Activated CD4-positive, alpha-beta memory T cell treated with anti-CD3 and anti-CD28 coated beads, Interleukin-2, amount 10 ng/mL, durations not matched to agents 7 days and 5 days (primary cell): ENCODE measurements at regions of chrX and their contacts with region 1.

Region 1: GRCh38 chrX:45843518-45843917 is 642.8 kb upstream of the DIPK2B start:
- DNase-seq: no peak
- H3K4me3 Mint-ChIP-seq: no peak overlapping the region
- H3K27ac Mint-ChIP-seq: peak overlapping the region; percentile 72
- H3K4me1 Mint-ChIP-seq: peaks cover 64% of the 10 kb centered on the region
- H3K27me3 Mint-ChIP-seq: no peaks in the 10 kb centered on the region

Region 2: GRCh38 chrX:45801554-45801953 is 42.0 kb before region 1 on chrX:
- CTCF ChIA-PET with region 1: interaction called, 11 read pairs
- POLR2A ChIA-PET with region 1: interaction called, 3 read pairs
- DNase-seq: no peak
- H3K4me3 Mint-ChIP-seq: peak overlapping the region; percentile 48
- H3K27ac Mint-ChIP-seq: peak overlapping the region; percentile 73
- H3K4me1 Mint-ChIP-seq: peaks cover 82% of the 10 kb centered on the region
- H3K27me3 Mint-ChIP-seq: no peaks in the 10 kb centered on the region

Region 3: GRCh38 chrX:45830343-45830742 is 13.2 kb before region 1 on chrX:
- CTCF ChIA-PET with region 1: interaction called, 5 read pairs
- POLR2A ChIA-PET with region 1: interaction called, 25 read pairs
- DNase-seq: no peak
- H3K4me3 Mint-ChIP-seq: peak overlapping the region; percentile 54
- H3K27ac Mint-ChIP-seq: peak overlapping the region; percentile 82
- H3K4me1 Mint-ChIP-seq: peaks cover 68% of the 10 kb centered on the region
- H3K27me3 Mint-ChIP-seq: no peaks in the 10 kb centered on the region

Region 4: DNA sequence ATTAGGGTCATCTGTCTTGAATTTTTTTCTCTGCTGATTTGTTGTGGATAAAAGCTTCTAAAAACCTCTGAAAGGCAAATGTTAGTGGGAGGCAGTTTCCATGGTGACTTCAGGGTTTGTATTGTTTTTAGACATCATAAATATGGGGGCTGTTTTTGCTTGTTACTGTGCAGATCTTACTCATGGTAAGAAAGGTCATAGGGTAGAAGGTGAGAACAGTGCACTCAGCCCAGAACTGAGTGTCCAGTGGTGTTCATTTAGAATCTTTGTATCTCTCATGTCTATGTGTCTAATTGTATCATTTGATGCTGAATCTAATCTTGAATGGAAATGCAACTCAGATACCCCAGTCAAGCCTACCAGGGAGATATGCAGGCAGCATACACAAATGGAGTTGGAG is 91.9 kb after region 1 on chrX:
- CTCF ChIA-PET with region 1: no interaction called
- POLR2A ChIA-PET with region 1: no interaction called
- DNase-seq: no peak
- H3K4me3 Mint-ChIP-seq: no peak overlapping the region
- H3K27ac Mint-ChIP-seq: no peak overlapping the region
- H3K4me1 Mint-ChIP-seq: no peaks in the 10 kb centered on the region
- H3K27me3 Mint-ChIP-seq: no peaks in the 10 kb centered on the region